Mammary epithelial cell (primary cell): ENCODE measurements at regions of chrX and their contacts with region 1.

Region 1: DNA sequence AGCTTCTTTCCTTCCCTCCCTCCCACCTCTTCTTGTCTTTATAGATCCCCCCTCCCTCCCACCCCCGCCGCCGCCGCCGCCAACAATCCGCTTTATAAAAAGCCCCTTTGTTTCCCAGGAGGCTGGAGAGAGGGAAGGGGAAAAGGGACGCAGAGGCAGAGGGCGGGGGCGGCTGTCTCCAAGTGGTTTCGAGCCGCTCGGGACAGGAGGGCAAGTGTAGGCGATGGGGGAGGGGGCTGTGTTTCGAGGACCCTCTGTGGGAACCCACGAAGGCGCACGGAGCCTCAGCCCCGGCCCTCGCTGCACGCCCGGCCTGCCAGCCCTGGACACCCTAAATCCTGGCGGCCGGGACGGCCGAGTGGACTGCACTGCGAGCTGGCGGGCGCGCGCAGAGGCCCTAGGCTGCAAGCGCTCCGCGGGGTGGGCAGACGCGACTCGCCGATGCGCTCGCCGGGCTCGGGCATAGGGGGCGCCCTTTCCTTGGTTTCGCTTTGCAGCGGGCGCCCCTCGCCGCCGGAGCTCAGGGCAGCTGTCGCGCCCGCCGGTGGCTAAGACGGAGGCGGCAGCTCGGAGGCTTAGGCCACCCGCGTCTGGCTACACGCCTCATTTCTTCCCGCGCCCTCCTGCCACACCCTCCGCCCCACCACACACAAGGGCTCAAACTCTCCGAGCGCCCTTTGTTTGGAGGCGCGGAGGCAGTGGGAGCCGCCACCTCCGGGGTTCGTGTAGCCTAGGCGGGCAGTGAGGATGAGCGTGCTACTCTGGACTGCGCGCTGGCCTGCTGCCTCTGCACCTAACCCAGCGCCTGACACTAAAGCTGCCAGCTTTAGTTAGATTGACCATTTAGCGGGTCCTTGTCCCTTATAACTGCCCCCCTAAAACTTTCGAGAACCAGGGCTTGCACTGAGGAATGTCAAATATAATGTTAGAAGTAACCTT is 2.2 kb downstream of the MAMLD1 start:
- DNase-seq: peak; percentile 42
- H3K4me3 ChIP-seq: peak overlapping the region; percentile 46 to 60 (median 60)
- H3K27ac ChIP-seq: peak overlapping the region; percentile 32
- H3K4me1 ChIP-seq: peaks cover 20% of the 10 kb centered on the region
- H3K27me3 ChIP-seq: no peaks in the 10 kb centered on the region
- CTCF ChIP-seq: peak; percentile 26 to 60

Region 2: DNA sequence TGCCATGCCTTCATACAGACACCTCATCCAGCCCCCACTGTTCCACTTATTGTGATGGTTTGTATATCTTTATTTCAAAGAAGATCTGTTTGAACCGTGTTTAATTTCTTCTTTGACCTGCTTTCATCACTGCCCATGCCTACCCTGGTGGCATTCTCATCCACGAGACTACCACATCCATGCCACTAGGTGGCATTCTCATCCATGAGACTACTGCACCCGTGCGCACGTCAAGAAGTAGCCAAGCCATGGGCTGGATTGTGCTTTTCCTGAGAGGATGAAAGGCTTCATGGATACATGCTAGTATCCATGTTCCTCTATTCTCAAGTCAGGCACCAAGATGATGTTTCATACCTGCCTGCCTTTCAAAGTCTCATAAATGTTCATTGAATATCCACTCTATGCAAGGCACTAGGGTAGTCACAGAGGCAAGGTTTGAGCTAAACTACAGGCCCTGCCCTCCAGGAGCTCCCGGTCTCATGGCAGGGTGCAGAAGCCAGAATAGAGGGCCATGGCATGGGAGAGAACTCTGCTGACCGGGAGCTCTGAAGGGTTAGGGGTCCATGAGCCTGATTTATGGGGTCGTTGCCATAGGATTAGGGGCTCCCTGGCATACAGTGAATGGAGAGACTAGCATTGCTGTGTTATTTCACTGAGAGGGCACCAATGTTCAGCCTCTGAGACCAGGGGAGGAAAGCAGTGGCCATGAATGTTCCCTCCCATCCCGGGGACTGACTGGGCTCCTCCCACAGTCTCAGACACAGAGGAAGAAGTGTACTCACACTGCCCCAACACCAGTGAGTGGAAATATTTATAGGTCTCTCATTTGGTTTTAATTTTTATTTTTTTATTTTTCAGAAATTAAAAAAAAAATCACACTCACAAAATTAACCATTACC is 402.2 kb before region 1 on chrX:
- CTCF ChIA-PET with region 1: interaction called, 4 read pairs
- dilution Hi-C with region 1: no loop called
- in situ Hi-C with region 1: loop called in 1 of 2 experiments (anchors 25 kb)
- intact Hi-C with region 1: loop called (anchors 1 kb)
- DNase-seq: peak; percentile 49
- H3K4me3 ChIP-seq: no peak overlapping the region
- H3K27ac ChIP-seq: no peak overlapping the region
- H3K4me1 ChIP-seq: no peaks in the 10 kb centered on the region
- H3K27me3 ChIP-seq: no peaks in the 10 kb centered on the region
- CTCF ChIP-seq: peak; percentile 58 to 77

Region 3: GRCh38 chrX:150146269-150146896 is 218.9 kb before region 1 on chrX:
- CTCF ChIA-PET with region 1: no interaction called
- dilution Hi-C with region 1: no loop called
- in situ Hi-C with region 1: no loop called
- intact Hi-C with region 1: loop called (anchors 2 kb)
- DNase-seq: no peak
- H3K4me3 ChIP-seq: no peak overlapping the region
- H3K27ac ChIP-seq: no peak overlapping the region
- H3K4me1 ChIP-seq: no peaks in the 10 kb centered on the region
- H3K27me3 ChIP-seq: no peaks in the 10 kb centered on the region
- CTCF ChIP-seq: peak; percentile 2 to 41

Region 4: DNA sequence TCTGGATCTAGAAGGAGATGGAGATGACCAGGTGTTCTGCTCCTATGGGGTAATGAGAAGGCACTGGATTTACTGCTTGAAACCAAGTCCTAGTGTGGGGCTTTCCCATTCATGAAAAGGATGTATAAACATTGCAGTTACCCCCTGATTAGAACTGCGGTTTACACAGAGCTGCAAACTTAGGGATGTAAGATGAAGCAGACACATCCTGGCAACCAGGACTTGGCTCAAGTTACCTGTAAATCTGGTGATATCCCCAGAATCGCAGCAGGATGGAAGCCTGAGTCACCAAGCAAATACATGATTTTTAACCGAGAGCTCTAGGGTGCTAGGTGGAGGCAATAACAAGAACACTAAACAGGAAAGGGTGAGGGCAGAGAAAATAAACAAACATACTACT is 180.8 kb before region 1 on chrX:
- CTCF ChIA-PET with region 1: no interaction called
- dilution Hi-C with region 1: no loop called
- in situ Hi-C with region 1: no loop called
- intact Hi-C with region 1: no loop called
- DNase-seq: peak; percentile 50
- H3K4me3 ChIP-seq: no peak overlapping the region
- H3K27ac ChIP-seq: no peak overlapping the region
- H3K4me1 ChIP-seq: no peaks in the 10 kb centered on the region
- H3K27me3 ChIP-seq: no peaks in the 10 kb centered on the region
- CTCF ChIP-seq: no peak

Region 5: GRCh38 chrX:150456471-150456870 is 91.2 kb after region 1 on chrX:
- CTCF ChIA-PET with region 1: no interaction called
- dilution Hi-C with region 1: no loop called
- in situ Hi-C with region 1: no loop called
- intact Hi-C with region 1: no loop called
- DNase-seq: peak; percentile 69
- H3K4me3 ChIP-seq: no peak overlapping the region
- H3K27ac ChIP-seq: no peak overlapping the region
- H3K4me1 ChIP-seq: peaks cover 4% of the 10 kb centered on the region
- H3K27me3 ChIP-seq: no peaks in the 10 kb centered on the region
- CTCF ChIP-seq: peak; percentile 3 to 25

Region 6: DNA sequence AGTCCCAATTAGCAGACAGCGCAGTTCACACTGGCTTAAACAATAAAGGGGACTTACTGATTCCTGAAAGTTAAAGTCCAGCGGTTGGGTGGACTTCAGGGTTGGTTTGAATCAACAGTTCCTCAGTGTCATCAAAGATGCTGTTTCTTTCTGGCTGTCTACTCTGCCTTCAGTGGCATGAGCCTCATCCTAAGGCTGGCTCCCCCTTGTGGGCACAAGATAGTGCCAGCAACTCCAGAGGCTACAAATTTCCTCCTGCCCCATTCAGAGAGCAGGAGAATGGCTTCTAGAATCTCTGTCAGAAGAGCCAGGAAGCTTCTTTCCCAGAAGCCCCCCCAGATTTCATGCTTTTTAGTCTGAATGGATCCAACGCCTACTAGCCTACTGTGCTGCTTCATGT is 120.7 kb after region 1 on chrX:
- CTCF ChIA-PET with region 1: no interaction called
- dilution Hi-C with region 1: no loop called
- in situ Hi-C with region 1: no loop called
- intact Hi-C with region 1: loop called (anchors 1 kb)
- DNase-seq: peak; percentile 30
- H3K4me3 ChIP-seq: no peak overlapping the region
- H3K27ac ChIP-seq: no peak overlapping the region
- H3K4me1 ChIP-seq: peaks cover 8% of the 10 kb centered on the region
- H3K27me3 ChIP-seq: no peaks in the 10 kb centered on the region
- CTCF ChIP-seq: peak; percentile 50 to 66

Region 7: DNA sequence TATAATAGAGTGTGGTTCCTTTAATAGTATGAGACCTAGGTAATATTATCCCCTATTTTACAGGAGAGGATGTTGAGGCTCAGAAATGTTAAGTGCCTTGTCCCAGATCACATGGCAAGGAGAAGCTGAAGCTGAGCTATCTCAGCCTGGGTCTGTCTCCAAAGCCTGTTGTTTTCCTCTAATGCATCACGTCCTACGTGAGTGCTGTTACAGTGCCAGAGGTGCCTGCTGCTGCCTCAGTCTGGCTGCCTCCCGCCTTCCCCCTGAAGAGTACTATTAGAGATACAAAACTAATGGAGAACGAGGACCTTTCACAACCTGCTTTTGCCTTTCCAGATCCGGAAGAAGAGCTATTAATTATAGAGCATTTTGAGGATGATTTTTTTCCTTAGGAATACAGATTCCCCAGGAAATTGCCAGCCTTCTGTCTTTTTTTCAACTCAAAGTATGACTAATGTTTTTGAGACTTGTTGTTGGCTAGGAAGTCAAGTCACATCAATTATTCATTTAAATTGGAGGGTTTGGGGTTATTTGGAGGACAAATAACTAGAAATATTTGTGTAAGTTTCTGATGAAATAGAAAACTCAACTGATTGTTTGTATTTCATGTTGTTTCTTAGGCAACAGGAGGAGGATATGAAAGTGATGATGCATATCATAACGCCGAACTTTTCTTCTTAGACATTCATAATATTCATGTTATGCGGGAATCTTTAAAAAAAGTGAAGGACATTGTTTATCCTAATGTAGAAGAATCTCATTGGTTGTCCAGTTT is 284.0 kb after region 1 on chrX:
- CTCF ChIA-PET with region 1: no interaction called
- dilution Hi-C with region 1: no loop called
- in situ Hi-C with region 1: no loop called
- intact Hi-C with region 1: loop called (anchors 10 kb)
- DNase-seq: no peak
- H3K4me3 ChIP-seq: no peak overlapping the region
- H3K27ac ChIP-seq: peak overlapping the region; percentile 4
- H3K4me1 ChIP-seq: peaks cover 7% of the 10 kb centered on the region
- H3K27me3 ChIP-seq: no peaks in the 10 kb centered on the region
- CTCF ChIP-seq: no peak

Region 8: GRCh38 chrX:150715184-150715583 is 349.9 kb after region 1 on chrX:
- CTCF ChIA-PET with region 1: no interaction called
- dilution Hi-C with region 1: no loop called
- in situ Hi-C with region 1: no loop called
- intact Hi-C with region 1: loop called (anchors 10 kb)
- DNase-seq: peak; percentile 23
- H3K4me3 ChIP-seq: no peak overlapping the region
- H3K27ac ChIP-seq: no peak overlapping the region
- H3K4me1 ChIP-seq: no peaks in the 10 kb centered on the region
- H3K27me3 ChIP-seq: no peaks in the 10 kb centered on the region
- CTCF ChIP-seq: no peak